Activated T-helper 2 cell treated with anti-CD3 and anti-CD28 coated beads, Interferon-gamma antibody, Interleukin-2, Interleukin-4, amounts not matched to agents 10 μg/mL and 5 μg/mL and 100 μg/mL, durations not matched to agents 14 hours and 24 hours and 36 hours (primary cell): ENCODE measurements at regions of chr7 and their contacts with region 1.

Region 1: GRCh38 chr7:101363734-101364374 is 1.2 kb downstream of the COL26A1 start:
- DNase-seq: peak; percentile 60
- H3K4me3 Mint-ChIP-seq: no peak overlapping the region
- H3K27ac Mint-ChIP-seq: no peak overlapping the region
- H3K4me1 Mint-ChIP-seq: peaks cover 17% of the 10 kb centered on the region
- H3K27me3 Mint-ChIP-seq: peaks cover 27% of the 10 kb centered on the region

Region 2: GRCh38 chr7:101390901-101391301 is 27.0 kb after region 1 on chr7:
- intact Hi-C with region 1: loop called (anchors 1 kb)
- DNase-seq: peak; percentile 33
- H3K4me3 Mint-ChIP-seq: no peak overlapping the region
- H3K27ac Mint-ChIP-seq: peak overlapping the region; percentile 68
- H3K4me1 Mint-ChIP-seq: peaks cover 13% of the 10 kb centered on the region
- H3K27me3 Mint-ChIP-seq: peaks cover 3% of the 10 kb centered on the region

Region 3: GRCh38 chr7:101401390-101402087 is 37.7 kb after region 1 on chr7:
- intact Hi-C with region 1: loop called (anchors 1 kb)
- DNase-seq: no peak
- H3K4me3 Mint-ChIP-seq: no peak overlapping the region
- H3K27ac Mint-ChIP-seq: no peak overlapping the region
- H3K4me1 Mint-ChIP-seq: no peaks in the 10 kb centered on the region
- H3K27me3 Mint-ChIP-seq: peaks cover 11% of the 10 kb centered on the region

Region 4: GRCh38 chr7:101412976-101413375 is 49.1 kb after region 1 on chr7:
- intact Hi-C with region 1: no loop called
- DNase-seq: no peak
- H3K4me3 Mint-ChIP-seq: no peak overlapping the region
- H3K27ac Mint-ChIP-seq: no peak overlapping the region
- H3K4me1 Mint-ChIP-seq: peaks cover 5% of the 10 kb centered on the region
- H3K27me3 Mint-ChIP-seq: peaks cover 5% of the 10 kb centered on the region

Region 5: DNA sequence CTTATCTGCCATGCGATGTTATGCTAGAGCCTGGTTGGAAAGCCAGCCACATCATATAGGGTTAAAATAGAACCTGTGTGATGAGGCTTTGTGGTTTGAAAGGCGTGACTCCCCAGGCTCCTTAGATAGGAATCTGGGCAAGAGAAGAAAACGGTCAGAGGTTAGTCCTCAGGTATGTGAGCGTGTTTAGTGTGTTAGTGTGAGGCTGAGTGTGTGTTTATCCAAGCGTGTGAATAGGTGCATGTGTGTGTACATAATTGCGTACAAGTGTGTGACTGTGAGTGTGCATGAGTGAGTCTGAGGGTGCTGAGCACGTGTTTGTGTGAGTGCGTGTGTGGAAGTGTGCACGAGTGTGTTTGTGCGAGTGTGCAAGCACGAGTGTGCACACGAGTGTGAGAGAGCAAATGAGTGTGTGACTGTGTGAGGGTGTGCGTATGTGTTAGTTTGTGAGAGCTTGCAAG is 78.7 kb after region 1 on chr7:
- intact Hi-C with region 1: loop called (anchors 5 kb)
- DNase-seq: no peak
- H3K4me3 Mint-ChIP-seq: no peak overlapping the region
- H3K27ac Mint-ChIP-seq: no peak overlapping the region
- H3K4me1 Mint-ChIP-seq: peaks cover 13% of the 10 kb centered on the region
- H3K27me3 Mint-ChIP-seq: peaks cover 7% of the 10 kb centered on the region

Region 6: GRCh38 chr7:101465576-101466196 is 101.8 kb after region 1 on chr7:
- intact Hi-C with region 1: no loop called
- DNase-seq: no peak
- H3K4me3 Mint-ChIP-seq: peak overlapping the region; percentile 5
- H3K27ac Mint-ChIP-seq: peak overlapping the region; percentile 42
- H3K4me1 Mint-ChIP-seq: peaks cover 10% of the 10 kb centered on the region
- H3K27me3 Mint-ChIP-seq: no peaks in the 10 kb centered on the region

Region 7: GRCh38 chr7:101507791-101508252 is 144.0 kb after region 1 on chr7:
- intact Hi-C with region 1: loop called (anchors 1 kb)
- DNase-seq: peak; percentile 27
- H3K4me3 Mint-ChIP-seq: peak overlapping the region; percentile 46
- H3K27ac Mint-ChIP-seq: no peak overlapping the region
- H3K4me1 Mint-ChIP-seq: peaks cover 25% of the 10 kb centered on the region
- H3K27me3 Mint-ChIP-seq: peaks cover 5% of the 10 kb centered on the region